ENCODE measurements at regions of chr16 and their contacts with region 1.

Region 1: GRCh38 chr16:57576429-57576870 is 34.0 kb downstream of the ADGRG5 start:
- DNase-seq: peak; percentile 94
- H3K4me3 Mint-ChIP-seq: no peak overlapping the region
- H3K27ac Mint-ChIP-seq: no peak overlapping the region
- H3K4me1 Mint-ChIP-seq: peaks cover 9% of the 10 kb centered on the region
- H3K27me3 Mint-ChIP-seq: peaks cover 3% of the 10 kb centered on the region

Region 2: GRCh38 chr16:57591086-57591869 is 14.8 kb after region 1 on chr16:
- CTCF ChIA-PET with region 1: interaction called, 17 read pairs
- intact Hi-C with region 1: loop called (anchors 1 kb)
- DNase-seq: peak; percentile 89
- H3K4me3 Mint-ChIP-seq: peak overlapping the region; percentile 40
- H3K27ac Mint-ChIP-seq: peak overlapping the region; percentile 90
- H3K4me1 Mint-ChIP-seq: peaks cover 32% of the 10 kb centered on the region
- H3K27me3 Mint-ChIP-seq: no peaks in the 10 kb centered on the region

Region 3: GRCh38 chr16:57609541-57610401 is 33.3 kb after region 1 on chr16:
- CTCF ChIA-PET with region 1: interaction called, 20 read pairs
- intact Hi-C with region 1: loop called (anchors 1 kb)
- DNase-seq: peak; percentile 92
- H3K4me3 Mint-ChIP-seq: peak overlapping the region; percentile 45
- H3K27ac Mint-ChIP-seq: peak overlapping the region; percentile 86
- H3K4me1 Mint-ChIP-seq: peaks cover 40% of the 10 kb centered on the region
- H3K27me3 Mint-ChIP-seq: no peaks in the 10 kb centered on the region

Region 4: GRCh38 chr16:57648590-57649442 is 72.4 kb after region 1 on chr16:
- CTCF ChIA-PET with region 1: interaction called, 162 read pairs
- intact Hi-C with region 1: loop called (anchors 1 kb)
- DNase-seq: peak; percentile 93
- H3K4me3 Mint-ChIP-seq: no peak overlapping the region
- H3K27ac Mint-ChIP-seq: peak overlapping the region; percentile 44
- H3K4me1 Mint-ChIP-seq: peaks cover 17% of the 10 kb centered on the region
- H3K27me3 Mint-ChIP-seq: no peaks in the 10 kb centered on the region

Region 5: DNA sequence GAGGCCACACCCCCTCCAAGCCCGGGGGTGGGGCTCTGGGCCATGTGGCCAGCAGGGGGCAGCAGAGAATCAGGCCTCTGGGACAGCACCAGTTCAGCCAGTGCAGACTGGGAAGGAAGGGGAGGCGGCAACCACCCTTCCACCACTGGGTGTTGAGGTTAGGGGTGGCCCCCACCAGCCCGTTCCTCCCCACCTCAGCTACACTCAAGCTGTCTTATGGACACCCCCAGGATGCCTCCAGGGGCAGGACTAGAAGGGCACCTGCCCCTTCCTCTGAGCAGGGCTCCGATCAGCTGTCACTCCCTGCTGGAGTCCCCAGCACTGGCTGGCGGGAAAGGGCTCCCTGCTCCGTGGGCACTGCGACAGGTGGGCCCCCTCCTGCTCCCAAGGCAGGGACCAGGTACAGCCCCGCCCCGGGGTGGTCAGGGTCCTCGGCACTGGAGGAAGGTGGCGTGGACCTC is 180.9 kb after region 1 on chr16:
- CTCF ChIA-PET with region 1: interaction called, 3 read pairs
- intact Hi-C with region 1: loop called (anchors 1 kb)
- DNase-seq: peak; percentile 94
- H3K4me3 Mint-ChIP-seq: no peak overlapping the region
- H3K27ac Mint-ChIP-seq: no peak overlapping the region
- H3K4me1 Mint-ChIP-seq: no peaks in the 10 kb centered on the region
- H3K27me3 Mint-ChIP-seq: no peaks in the 10 kb centered on the region